ENCODE measurements at regions of chr7 and their contacts with region 1.

Region 1: DNA sequence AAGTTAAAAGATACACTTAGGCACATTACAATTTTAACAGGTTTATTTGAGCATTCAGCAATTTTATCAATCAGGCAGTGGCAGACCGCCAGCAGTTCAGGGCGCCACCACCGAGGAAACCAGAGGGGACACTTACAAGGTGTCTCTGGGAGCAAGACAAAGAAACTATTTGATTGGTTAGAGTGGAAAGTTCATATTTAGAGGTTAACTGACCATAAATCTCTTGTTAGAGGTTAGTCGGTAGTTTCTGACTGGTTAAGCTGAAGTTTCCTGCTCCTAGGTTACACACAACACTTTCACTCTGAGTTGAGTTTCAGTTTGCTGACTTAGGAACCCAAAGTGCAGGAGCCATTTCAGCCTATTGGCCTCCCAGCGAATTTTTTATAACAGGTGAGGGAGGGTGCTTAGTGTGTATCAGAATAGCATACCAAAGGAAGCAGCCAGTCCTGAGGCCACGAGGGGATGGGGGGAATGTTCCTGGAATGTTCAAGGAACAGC is 10.8 kb upstream of the PVRIG start:
- DNase-seq: no peak
- H3K4me3 ChIP-seq: no peak overlapping the region
- CTCF ChIP-seq: no peak
- POLR2A ChIP-seq: no peak

Region 2: GRCh38 chr7:100132697-100133151 is 76.2 kb before region 1 on chr7:
- intact Hi-C with region 1: loop called (anchors 10 kb)
- DNase-seq: no peak
- H3K4me3 ChIP-seq: no peak overlapping the region
- CTCF ChIP-seq: peak in 1 of 3 donors; percentile 83
- POLR2A ChIP-seq: no peak